ENCODE measurements at regions of chr10 and their contacts with region 1.

Region 1: DNA sequence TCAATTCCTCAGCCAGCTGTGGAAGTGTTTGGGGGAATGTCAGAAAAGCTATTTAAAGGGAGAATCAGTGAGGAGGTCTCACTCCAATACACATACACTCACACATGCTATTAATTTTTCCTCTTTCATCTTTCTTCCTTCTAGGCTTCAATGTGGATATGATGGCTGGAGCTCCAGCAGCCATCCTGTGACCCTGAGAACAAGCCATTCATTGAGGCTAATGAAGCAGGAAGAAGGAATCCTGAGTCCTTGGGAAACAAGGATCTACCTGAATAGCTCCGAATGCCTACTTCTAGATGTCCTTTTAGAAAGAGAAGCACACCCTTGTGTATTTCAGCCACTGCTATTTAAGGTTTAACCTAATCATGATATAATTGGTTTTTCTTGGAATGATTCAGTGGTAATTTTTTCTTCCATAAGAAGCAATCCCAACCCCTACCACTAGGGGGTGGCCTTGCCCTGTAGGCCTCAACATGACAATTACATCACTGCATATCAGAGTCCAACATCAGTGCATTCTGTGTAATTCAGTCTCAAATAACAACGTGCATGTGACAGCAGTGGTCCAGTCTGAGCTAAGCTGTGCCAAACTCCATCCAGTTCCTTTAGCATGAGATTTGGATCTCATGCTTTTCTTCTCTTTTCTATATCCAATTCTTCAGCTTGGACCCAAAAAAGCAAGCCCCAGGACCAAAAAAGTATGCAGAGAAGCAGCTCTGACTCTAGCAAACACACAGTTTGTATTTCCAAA is 85.3 kb upstream of the ANKRD1 start:
- DNase-seq: peak; percentile 76
- ATAC-seq: peak; percentile 80
- H3K4me3 Mint-ChIP-seq: no peak overlapping the region
- H3K27ac Mint-ChIP-seq: no peak overlapping the region
- H3K4me1 Mint-ChIP-seq: peaks cover 32% of the 10 kb centered on the region
- H3K27me3 Mint-ChIP-seq: peaks cover 3% of the 10 kb centered on the region

Region 2: DNA sequence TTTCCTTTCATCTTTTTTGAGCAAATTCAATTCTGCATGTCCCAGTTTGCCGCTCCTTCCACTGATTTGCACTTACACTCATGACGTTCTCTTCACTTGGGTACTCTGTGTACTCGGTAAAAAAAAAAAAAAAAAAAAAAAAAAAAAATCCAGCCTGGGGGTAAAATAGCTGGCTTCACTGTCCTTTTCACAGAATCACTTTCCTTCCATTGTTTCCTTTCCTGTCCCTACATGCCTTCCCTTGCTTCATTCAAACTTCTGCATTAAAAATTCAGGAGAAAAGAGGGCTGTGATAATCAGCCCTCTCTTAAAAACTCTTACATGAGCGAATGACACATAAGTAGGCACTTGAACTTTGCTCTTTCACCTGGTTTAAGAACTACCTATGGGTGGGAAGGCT is 94.0 kb before region 1 on chr10:
- CTCF ChIA-PET with region 1: interaction called, 11 read pairs
- POLR2A ChIA-PET with region 1: no interaction called
- intact Hi-C with region 1: loop called (anchors 1 to 5 kb)
- DNase-seq: no peak
- ATAC-seq: no peak
- H3K4me3 Mint-ChIP-seq: no peak overlapping the region
- H3K27ac Mint-ChIP-seq: no peak overlapping the region
- H3K4me1 Mint-ChIP-seq: peaks cover 2% of the 10 kb centered on the region
- H3K27me3 Mint-ChIP-seq: no peaks in the 10 kb centered on the region

Region 3: GRCh38 chr10:91032611-91033206 is 26.5 kb after region 1 on chr10:
- CTCF ChIA-PET with region 1: interaction called, 13 read pairs
- POLR2A ChIA-PET with region 1: no interaction called
- intact Hi-C with region 1: no loop called
- DNase-seq: no peak
- ATAC-seq: no peak
- H3K4me3 Mint-ChIP-seq: no peak overlapping the region
- H3K27ac Mint-ChIP-seq: no peak overlapping the region
- H3K4me1 Mint-ChIP-seq: peaks cover 18% of the 10 kb centered on the region
- H3K27me3 Mint-ChIP-seq: no peaks in the 10 kb centered on the region

Region 4: GRCh38 chr10:91088300-91089140 is 82.3 kb after region 1 on chr10:
- CTCF ChIA-PET with region 1: interaction called, 7 read pairs
- POLR2A ChIA-PET with region 1: no interaction called
- intact Hi-C with region 1: loop called (anchors 5 kb)
- DNase-seq: no peak
- ATAC-seq: no peak
- H3K4me3 Mint-ChIP-seq: no peak overlapping the region
- H3K27ac Mint-ChIP-seq: no peak overlapping the region
- H3K4me1 Mint-ChIP-seq: no peaks in the 10 kb centered on the region
- H3K27me3 Mint-ChIP-seq: no peaks in the 10 kb centered on the region

Region 5: DNA sequence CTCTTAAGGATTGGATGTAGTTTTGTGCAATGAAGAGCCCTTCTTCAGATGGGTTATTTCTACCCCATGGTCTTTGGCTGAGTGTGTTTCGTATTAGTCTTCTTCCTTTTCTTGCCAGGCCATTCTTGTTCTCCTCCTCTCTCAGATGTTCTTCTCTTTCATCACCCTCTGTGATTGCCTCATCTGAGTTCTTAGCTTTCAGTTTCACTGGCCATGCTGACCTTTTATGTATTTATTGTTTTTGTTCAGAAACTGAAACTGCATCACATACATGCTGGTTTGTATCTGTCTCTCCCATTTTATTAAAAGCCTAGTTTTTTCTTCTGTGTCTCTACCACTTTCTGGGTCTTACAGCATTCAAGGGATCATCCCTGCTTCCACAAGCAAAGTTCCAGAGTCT is 192.6 kb after region 1 on chr10:
- CTCF ChIA-PET with region 1: interaction called, 4 read pairs
- POLR2A ChIA-PET with region 1: no interaction called
- intact Hi-C with region 1: loop called (anchors 2 to 5 kb)
- DNase-seq: peak; percentile 19
- ATAC-seq: peak; percentile 30
- H3K4me3 Mint-ChIP-seq: no peak overlapping the region
- H3K27ac Mint-ChIP-seq: peak overlapping the region; percentile 82
- H3K4me1 Mint-ChIP-seq: peaks cover 82% of the 10 kb centered on the region
- H3K27me3 Mint-ChIP-seq: no peaks in the 10 kb centered on the region

Region 6: GRCh38 chr10:91298224-91298871 is 292.2 kb after region 1 on chr10:
- CTCF ChIA-PET with region 1: interaction called, 23 read pairs
- POLR2A ChIA-PET with region 1: no interaction called
- intact Hi-C with region 1: loop called in 1 of 2 experiments (anchors 1 kb)
- DNase-seq: peak; percentile 91
- ATAC-seq: peak; percentile 98
- H3K4me3 Mint-ChIP-seq: peak overlapping the region; percentile 61
- H3K27ac Mint-ChIP-seq: peak overlapping the region; percentile 22
- H3K4me1 Mint-ChIP-seq: peaks cover 9% of the 10 kb centered on the region
- H3K27me3 Mint-ChIP-seq: no peaks in the 10 kb centered on the region

Region 7: GRCh38 chr10:91632671-91633550 is 626.7 kb after region 1 on chr10 and contains the start of gene PPP1R3C:
- CTCF ChIA-PET with region 1: no interaction called
- POLR2A ChIA-PET with region 1: no interaction called
- intact Hi-C with region 1: loop called in 1 of 2 experiments (anchors 10 kb)
- DNase-seq: peak; percentile 83
- ATAC-seq: peak; percentile 95
- H3K4me3 Mint-ChIP-seq: peak within 1 kb of the TSS; percentile 65
- H3K27ac Mint-ChIP-seq: no peak within 1 kb of the TSS
- H3K4me1 Mint-ChIP-seq: peaks cover 8% of the 10 kb centered on the region
- H3K27me3 Mint-ChIP-seq: peaks cover 59% of the 10 kb centered on the region
- total RNA-seq, gene PPP1R3C: 0.63 to 0.71 TPM

Measured in activated CD4-positive, alpha-beta T cell treated with anti-CD3 and anti-CD28 coated beads for 36 hours (primary cell).